ENCODE measurements at regions of chr10 and their contacts with region 1.

Region 1: DNA sequence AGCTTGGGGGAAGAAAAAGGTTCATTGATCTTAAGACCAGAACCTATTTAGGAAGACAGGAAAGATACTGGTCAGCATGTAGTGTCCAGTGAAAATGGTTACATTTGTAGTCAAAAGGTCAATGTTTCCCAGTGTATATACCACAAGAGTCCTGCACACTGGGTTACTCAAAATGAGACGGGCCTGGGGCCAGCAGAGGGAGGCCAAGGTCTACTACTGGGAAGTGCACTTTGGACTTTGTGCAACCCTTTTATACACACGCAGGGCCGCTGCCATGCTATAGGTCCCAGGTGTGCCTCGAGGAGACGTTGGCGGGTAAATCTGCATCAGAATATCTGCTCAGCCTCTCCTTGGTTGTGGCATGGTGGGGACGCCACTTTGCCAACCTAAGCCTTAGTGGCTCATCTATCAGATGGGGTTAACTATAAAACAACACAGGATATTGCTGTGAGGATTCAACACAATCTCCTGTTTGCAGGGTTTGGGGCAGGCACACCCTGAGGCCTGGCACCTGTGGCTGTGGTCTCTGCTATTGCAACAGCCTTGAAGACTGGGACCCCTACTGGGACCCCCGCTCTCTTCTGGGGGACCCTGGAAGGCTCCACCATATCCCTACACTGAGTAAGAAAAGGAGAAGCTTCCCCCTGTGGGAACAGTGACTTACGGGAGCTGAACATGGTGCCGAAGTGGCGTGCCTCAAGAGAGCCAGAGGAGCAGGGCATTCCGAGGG is 19.7 kb downstream of the CLRN3 start:
- DNase-seq: peak; percentile 78 to 84 (median 83)
- ATAC-seq: peak; percentile 96 to 98 (median 96)
- H3K4me3 ChIP-seq: no peak overlapping the region
- H3K27ac ChIP-seq: peak overlapping the region in 1 of 3 donors; percentile 32
- H3K4me1 ChIP-seq: peaks cover 0 to 18% (median 8%) of the 10 kb centered on the region in 4 donors
- H3K27me3 ChIP-seq: no peaks in the 10 kb centered on the region
- CTCF ChIP-seq: peak; percentile 40 to 49 (median 46)
- POLR2A ChIP-seq: no peak

Region 2: DNA sequence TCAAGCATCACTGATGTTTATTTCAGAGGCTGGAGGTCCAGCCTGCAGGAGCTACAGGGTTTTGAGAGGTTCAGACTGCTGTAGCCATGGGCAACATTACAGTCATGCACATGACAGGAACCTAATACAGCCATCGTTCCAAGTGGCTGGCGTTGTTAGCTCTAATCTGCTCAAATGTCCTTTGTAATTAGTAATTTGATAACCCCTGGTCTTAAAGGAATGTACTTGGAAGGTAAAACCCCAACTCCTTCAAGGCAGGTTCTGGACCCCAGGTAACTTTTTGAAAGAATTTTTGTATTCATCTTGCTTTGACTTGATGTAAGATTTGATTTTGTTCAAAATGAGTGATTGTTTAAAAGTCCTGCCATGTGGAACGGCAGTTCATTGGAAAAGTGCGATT is 170.8 kb before region 1 on chr10:
- intact Hi-C with region 1: no loop called
- DNase-seq: no peak
- ATAC-seq: no peak
- H3K4me3 ChIP-seq: no peak overlapping the region
- H3K27ac ChIP-seq: no peak overlapping the region
- H3K4me1 ChIP-seq: no peaks in the 10 kb centered on the region
- H3K27me3 ChIP-seq: no peaks in the 10 kb centered on the region
- CTCF ChIP-seq: no peak
- POLR2A ChIP-seq: no peak

Region 3: GRCh38 chr10:127952575-127952869 is 79.5 kb after region 1 on chr10:
- intact Hi-C with region 1: no loop called
- DNase-seq: no peak
- ATAC-seq: no peak
- H3K4me3 ChIP-seq: no peak overlapping the region
- H3K27ac ChIP-seq: no peak overlapping the region
- H3K4me1 ChIP-seq: no peaks in the 10 kb centered on the region
- H3K27me3 ChIP-seq: no peaks in the 10 kb centered on the region
- CTCF ChIP-seq: no peak
- POLR2A ChIP-seq: no peak

Region 4: DNA sequence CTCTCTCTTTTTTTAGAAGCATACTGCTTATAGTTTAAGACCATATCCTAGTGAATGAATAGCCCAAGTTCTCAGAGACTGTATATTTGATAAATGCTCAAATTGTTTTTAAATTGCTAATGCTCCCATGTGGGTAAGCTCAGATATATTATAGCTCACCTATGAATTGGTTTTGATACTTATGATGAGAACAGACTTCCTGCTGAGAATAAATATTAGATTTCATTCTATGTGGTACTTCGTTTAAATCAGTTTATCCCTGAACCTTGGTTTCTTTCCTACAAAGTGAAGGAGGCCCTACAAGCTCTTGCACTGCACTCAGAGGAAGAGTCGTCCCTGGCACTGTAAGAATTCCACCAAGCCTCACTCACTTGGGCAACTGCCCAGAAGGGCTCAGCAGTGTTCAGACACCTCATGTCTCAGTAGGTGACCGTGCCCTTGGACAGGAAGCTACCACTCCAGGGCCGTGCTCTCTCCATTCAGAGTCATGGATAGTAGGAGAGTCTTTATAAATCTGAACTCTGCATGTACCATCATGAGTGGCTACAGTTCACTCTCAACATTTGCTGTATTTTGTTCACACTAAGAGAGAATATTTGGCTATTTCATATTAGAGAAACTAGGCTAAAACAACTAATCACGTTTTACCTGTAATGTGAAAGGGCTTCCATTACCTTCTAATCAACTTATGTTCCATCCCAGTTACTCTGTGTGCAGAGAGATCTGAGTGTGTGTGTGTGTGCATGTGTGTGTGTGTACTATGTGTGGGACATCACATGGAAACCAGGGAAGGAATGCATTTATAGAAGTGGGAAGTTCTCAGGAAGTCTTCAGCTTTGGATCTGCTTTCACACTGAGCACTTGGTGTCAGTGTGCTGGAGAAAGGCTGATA is 127.7 kb after region 1 on chr10:
- intact Hi-C with region 1: loop called in 1 of 2 experiments (anchors 10 kb)
- DNase-seq: peak in 1 of 3 donors; percentile 30
- ATAC-seq: peak in 1 of 4 donors; percentile 25
- H3K4me3 ChIP-seq: no peak overlapping the region
- H3K27ac ChIP-seq: no peak overlapping the region
- H3K4me1 ChIP-seq: no peaks in the 10 kb centered on the region
- H3K27me3 ChIP-seq: no peaks in the 10 kb centered on the region
- CTCF ChIP-seq: no peak
- POLR2A ChIP-seq: no peak

Region 5: DNA sequence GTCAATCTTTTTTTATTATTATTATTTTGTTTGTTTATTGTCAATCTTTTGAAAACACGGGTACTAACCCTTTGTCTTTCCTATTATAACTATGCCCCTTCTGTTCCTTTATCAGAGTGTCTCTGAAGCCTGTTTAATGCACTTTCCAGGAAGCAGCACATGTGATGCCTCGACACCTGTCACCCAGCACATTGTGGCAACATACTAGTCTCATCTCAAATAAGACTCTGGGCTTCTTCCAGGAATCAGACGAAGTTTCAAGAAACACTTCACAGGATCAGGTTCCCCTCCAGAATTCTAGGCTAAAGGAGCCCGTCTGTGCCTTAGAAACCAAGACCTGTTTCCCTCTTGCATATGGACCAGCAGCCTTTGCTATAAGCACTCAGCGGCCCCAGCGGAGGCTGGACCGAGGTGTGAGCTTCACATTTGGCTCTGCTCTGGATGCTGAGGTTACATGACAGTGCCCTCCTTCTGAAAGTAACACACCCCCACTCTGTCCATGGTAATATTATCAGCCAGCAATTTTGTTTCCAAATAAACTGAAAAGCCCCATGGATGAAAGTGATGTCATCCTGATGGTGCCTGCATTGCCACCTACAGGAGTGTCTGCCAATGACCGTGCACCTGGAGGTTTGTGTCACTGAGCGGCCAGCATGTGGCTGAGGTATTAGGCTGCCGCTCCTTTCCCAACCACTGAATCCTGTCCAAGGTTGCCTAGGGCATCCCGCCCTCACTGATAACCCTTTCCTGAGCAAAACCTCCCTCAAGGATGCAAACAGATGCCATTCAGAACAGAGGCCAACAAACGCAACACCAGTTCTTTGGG is 215.1 kb after region 1 on chr10:
- intact Hi-C with region 1: no loop called
- DNase-seq: peak in 1 of 3 donors; percentile 43
- ATAC-seq: peak in 3 of 4 donors; percentile 55 to 82 (median 55)
- H3K4me3 ChIP-seq: no peak overlapping the region
- H3K27ac ChIP-seq: no peak overlapping the region
- H3K4me1 ChIP-seq: no peaks in the 10 kb centered on the region
- H3K27me3 ChIP-seq: no peaks in the 10 kb centered on the region
- CTCF ChIP-seq: peak in 3 of 4 donors; percentile 12 to 24 (median 13)
- POLR2A ChIP-seq: no peak

Region 6: DNA sequence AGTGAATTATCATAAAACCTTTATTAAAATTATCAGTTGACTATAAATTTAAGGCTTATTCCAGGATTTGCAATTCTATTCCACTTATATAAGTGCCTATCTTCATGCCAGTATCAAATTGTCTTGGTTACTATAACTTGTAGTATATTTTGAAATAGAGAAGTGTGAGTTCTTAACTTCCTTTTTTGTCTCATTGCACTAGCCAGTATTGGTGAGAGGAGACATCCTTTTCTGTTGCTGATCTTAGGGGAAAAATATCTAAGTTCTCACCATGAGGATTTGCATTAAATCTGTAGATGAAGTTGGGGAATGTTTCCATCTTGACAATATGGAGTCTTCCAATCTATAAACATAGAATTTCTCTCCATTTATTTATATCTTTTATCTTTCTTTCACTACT is 357.4 kb after region 1 on chr10:
- intact Hi-C with region 1: no loop called
- DNase-seq: no peak
- ATAC-seq: no peak
- H3K4me3 ChIP-seq: no peak overlapping the region
- H3K27ac ChIP-seq: no peak overlapping the region
- H3K4me1 ChIP-seq: no peaks in the 10 kb centered on the region
- H3K27me3 ChIP-seq: no peaks in the 10 kb centered on the region
- CTCF ChIP-seq: no peak
- POLR2A ChIP-seq: no peak

Measured in right lobe of liver (tissue), 6 donors.